Activated CD4-positive, alpha-beta T cell treated with anti-CD3 and anti-CD28 coated beads, Interleukin-2, amount 10 ng/mL, durations not matched to agents 24 days and 14 days (primary cell): ENCODE measurements at regions of chr7 and their contacts with region 1.

Region 1: DNA sequence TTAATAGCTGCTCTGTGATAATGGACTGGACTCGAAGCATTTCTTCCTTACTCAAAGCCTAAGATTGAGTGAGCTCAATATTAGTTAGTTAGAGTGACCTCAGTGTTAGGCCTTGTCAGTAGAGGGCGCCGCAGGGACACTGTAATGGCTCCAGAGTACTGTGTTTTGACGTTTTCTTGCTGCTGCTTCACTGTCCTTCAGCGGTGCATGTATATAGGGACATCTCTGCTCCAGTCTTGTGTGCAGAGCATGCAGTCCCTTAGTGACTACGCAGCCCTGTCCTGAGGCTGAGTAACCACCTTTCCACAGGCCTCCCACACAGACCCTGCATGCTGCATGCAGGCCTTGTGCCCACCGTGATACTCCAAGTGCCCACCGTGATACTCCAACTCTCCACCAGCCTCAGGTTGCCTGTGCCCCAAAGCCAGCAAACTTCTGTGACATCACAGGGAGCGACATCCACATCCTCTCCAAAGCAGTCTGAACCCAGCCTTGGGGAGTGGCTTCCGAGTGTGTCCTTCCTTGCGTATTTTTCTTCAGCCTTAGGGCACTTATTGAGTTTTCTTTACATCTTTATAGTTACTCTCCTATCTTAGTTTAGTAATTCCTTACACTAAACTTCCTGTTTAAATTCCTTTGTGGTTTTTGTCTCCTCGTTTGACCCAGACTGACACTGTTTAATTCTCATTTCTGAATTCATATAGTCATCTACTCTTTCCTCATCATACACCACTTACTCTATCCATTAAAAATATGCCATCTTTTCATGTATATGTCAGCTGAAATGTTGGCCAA is 118.2 kb downstream of the JAZF1 start:
- DNase-seq: peak; percentile 80
- H3K4me3 Mint-ChIP-seq: no peak overlapping the region
- H3K27ac Mint-ChIP-seq: no peak overlapping the region
- H3K4me1 Mint-ChIP-seq: peaks cover 2% of the 10 kb centered on the region
- H3K27me3 Mint-ChIP-seq: peaks cover 19% of the 10 kb centered on the region

Region 2: GRCh38 chr7:28044825-28045224 is 17.6 kb before region 1 on chr7:
- intact Hi-C with region 1: loop called (anchors 2 kb)
- DNase-seq: no peak
- H3K4me3 Mint-ChIP-seq: no peak overlapping the region
- H3K27ac Mint-ChIP-seq: no peak overlapping the region
- H3K4me1 Mint-ChIP-seq: peaks cover 4% of the 10 kb centered on the region
- H3K27me3 Mint-ChIP-seq: peaks cover 33% of the 10 kb centered on the region

Region 3: GRCh38 chr7:28096713-28097112 is 34.3 kb after region 1 on chr7:
- intact Hi-C with region 1: loop called (anchors 2 kb)
- DNase-seq: peak; percentile 76
- H3K4me3 Mint-ChIP-seq: no peak overlapping the region
- H3K27ac Mint-ChIP-seq: no peak overlapping the region
- H3K4me1 Mint-ChIP-seq: no peaks in the 10 kb centered on the region
- H3K27me3 Mint-ChIP-seq: peaks cover 2% of the 10 kb centered on the region

Region 4: GRCh38 chr7:28298870-28299518 is 236.6 kb after region 1 on chr7:
- intact Hi-C with region 1: no loop called
- DNase-seq: no peak
- H3K4me3 Mint-ChIP-seq: no peak overlapping the region
- H3K27ac Mint-ChIP-seq: no peak overlapping the region
- H3K4me1 Mint-ChIP-seq: no peaks in the 10 kb centered on the region
- H3K27me3 Mint-ChIP-seq: peaks cover 23% of the 10 kb centered on the region